ENCODE measurements at regions of chr3 and their contacts with region 1.

Region 1: GRCh38 chr3:155701882-155702465 is 42.9 kb downstream of the PLCH1 start:
- DNase-seq: no peak
- ATAC-seq: peak; percentile 59

Region 2: DNA sequence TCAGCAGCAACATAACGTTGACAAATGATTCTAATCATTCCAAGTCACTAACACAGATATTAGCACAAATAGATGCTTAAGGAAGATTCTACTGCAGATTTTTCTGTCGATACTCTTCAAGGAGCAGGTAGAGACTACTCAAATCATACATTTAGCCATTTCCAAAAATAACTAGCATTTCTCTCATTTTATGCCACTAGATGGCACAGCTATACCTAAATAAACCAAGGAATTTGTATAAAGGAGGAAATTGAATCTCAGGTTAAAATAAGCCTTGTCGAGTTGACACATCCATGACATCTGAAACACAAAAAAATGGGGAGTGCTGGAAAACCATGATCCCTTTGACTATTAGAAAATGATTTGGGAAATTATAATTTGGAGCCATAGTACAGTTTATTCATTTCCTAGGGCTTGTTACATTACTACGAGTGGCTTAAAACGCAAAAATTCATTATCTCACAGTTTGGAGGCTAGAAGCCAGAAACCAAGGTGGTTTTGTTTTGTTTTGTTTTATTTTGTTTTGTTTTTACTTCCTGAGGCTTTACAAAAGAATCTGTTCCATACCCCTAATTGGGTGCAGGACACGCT is 349.0 kb before region 1 on chr3:
- intact Hi-C with region 1: loop called in 1 of 2 experiments (anchors 5 kb)
- DNase-seq: no peak
- ATAC-seq: no peak

Region 3: DNA sequence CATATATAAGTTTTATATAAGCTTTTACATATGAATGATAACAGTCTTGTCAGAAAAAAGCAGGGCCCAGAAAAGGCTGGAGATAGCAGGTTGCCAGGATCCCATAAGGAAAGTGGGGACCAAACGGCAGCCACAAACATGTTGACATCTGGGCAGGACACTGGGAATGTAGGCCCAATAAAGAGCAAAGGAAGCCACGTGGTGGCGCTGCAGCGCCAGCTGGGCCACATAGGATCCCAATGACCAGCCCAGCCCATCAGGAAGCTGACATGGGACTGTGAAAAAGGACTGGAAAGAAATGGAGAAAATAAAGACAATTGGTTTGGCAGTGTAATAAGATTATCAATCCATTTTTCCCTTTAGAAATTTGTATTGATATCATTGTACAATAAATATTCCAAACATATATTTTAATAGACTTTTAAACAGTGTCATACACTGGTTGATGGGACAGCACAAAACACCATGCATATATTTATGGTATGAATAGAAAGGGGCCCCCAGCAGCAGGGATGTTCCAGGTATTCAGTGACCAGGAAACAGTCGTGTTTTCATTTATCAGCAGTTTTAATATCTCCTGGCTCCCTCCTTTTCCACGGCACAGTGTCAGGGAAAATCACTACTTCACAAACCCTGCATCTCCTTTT is 319.5 kb before region 1 on chr3:
- intact Hi-C with region 1: loop called in 1 of 2 experiments (anchors 10 kb)
- DNase-seq: peak; percentile 56 to 89
- ATAC-seq: peak; percentile 100

Region 4: DNA sequence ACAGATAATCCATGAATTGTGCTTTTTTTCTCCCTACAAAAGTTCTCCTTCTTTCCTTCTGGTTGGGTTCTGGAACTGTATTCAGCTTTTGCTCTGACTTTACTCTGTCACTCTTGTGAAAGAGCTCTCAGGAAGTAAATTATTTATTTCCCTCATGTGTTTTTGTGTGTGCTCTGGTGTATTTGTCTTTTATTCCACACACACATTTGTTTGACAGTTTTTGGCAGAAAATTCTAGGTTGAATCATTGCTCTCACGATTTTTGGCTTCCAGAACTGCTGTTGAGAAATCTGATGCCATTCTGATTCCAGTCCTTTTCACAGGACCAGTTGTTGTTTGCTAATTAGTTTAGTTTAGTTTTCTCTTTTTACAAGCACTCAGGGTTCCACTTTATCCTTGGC is 129.9 kb before region 1 on chr3:
- intact Hi-C with region 1: no loop called
- DNase-seq: no peak
- ATAC-seq: no peak